ENCODE measurements at regions of chr16 and their contacts with region 1.

Region 1: GRCh38 chr16:53054670-53055485 is at the start of gene CHD9:
- DNase-seq: no peak
- H3K4me3 ChIP-seq: peak within 1 kb of the TSS; percentile 80
- CTCF ChIP-seq: peak; percentile 100

Region 2: DNA sequence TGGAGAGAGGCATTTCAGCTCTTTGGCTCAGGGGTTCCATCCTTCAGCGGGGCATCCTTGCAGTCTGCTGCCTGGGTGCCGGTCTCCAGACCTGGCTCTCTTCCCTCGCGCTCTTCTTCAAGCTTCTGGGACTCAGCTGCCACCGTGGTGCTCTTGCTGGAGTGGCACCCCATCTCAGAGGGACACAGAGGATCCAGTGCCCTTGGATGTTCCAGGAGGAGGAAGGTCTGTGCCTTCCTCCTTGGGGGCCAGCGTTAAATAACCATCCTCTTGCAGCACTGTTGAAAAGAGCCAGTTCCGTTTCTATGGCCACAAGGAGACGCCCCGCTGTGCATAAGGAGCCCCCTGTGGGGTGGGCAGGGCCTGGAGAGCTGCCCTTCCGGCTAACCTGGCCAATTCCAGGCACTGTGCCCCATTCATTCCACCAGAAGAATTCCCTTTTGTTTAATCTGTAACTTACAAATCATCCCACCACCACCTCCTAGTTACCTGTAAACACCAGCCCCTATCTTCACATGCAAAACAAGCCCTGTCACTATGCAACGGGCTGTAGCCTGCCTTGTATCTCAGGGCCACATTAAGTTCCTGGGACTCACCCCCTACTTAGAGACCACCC is 10.8 kb before region 1 on chr16:
- CTCF ChIA-PET with region 1: interaction called, 13 read pairs
- POLR2A ChIA-PET with region 1: interaction called, 4 read pairs
- DNase-seq: no peak
- H3K4me3 ChIP-seq: no peak overlapping the region
- CTCF ChIP-seq: no peak

Region 3: DNA sequence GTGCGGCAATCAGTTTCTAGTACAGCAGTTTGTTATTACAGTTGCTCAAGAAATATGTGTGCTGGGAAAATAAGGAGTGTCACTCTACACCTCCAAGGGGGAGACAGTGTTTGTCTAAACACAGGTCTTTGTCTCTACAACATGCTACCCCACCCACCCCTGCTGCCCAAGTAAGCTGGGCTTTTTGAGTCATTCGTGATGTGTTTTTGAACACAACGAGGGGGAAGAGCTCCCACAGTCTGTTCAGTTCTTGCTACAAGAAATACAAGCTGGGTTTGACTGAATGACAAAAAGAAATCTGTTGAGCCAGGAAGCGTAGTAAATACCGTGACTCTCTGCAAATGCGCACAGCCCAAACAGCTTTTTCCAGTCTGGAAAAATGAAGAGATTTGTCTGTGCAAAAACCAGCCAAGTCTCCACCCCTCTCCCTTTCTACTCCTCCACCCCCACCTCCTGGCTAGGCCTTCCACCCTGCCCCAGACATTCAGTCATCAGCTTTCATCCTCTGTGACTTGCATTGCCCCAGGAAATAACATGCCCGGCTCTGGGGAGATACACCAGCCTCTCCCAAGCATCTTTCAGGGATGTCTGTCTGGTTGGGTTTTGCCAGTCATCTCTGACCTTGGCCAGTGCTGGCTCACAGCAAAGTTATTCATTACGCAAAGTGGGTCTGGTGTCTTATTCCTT is 25.6 kb after region 1 on chr16:
- CTCF ChIA-PET with region 1: interaction called, 28 read pairs
- POLR2A ChIA-PET with region 1: interaction called, 5 read pairs
- DNase-seq: no peak
- H3K4me3 ChIP-seq: peak overlapping the region; percentile 18
- CTCF ChIP-seq: no peak

Region 4: DNA sequence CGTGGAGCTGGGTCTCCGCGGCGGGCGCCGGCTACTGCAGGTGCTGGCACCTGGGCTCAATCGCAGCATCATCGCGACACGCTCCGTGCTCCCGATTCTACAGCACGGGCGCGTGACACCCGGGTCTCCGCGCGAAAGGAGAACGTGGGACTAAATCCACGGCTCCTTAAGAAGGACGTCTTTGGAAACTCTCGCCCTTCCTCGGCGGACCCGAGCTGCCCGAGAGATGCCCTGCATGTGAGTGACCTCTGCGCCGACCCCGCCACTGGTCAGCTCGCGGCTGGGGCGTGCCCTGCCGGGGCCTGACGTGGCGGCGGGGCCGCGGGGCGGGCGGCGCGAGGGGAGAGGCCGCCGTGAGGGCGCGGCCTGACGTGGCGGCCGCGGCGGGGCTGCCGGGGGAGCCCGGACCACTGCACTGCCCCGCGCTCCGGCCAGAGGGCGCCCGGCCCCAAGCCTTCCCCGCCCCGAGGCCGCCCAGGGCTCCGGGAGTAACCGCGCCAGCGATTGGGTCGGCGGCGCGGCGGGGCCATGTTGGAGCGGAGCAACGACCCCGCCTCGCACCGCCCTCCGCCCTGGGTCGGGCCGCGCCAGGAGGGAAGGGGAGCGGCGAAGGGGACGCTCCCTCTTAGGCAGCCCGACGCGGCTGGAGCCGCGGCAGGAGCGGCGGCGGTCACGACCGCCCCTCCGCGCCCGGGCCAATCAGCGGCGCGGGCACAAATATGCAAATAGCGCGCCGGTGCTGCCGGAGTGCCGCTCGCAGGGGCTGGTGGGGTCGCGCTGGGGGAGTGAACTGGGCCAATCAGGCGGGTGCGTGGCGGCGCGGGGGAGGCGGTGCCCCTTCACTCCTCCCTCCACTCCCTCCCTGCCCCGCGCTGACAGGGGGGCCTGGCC is 75.5 kb after region 1 on chr16:
- CTCF ChIA-PET with region 1: interaction called, 11 read pairs
- POLR2A ChIA-PET with region 1: interaction called, 13 read pairs
- DNase-seq: peak; percentile 66
- H3K4me3 ChIP-seq: peak overlapping the region; percentile 80
- CTCF ChIP-seq: peak; percentile 74

Region 5: DNA sequence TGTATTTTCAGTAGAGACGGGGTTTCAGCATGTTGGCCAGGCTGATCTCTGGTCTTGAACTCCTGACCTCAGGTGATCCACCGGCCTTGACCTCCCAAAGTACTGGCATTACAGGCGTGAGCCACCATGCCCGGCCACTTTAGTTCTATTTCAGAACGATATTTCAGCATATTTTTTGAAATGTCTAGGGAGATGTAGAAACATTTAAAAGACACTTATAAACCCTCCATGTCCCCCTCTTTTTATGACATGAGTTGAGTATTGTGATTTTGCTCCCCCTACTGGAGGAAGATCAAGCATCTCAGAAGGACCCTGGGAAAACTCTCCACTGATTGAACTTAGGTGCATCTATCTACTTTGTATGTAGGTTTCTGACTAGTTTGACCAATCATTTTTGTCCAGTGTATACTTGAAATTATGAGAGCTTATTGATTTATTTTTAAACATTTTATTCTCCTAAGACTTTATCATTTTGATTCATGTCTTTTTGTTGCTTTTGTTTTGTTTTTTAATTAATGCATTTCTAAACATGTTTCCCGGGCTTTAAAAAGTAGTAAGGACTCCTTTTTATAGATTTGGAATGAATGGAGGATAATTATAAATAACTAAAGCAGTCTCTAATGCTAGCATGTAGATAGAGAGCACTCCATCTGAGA is 105.0 kb after region 1 on chr16:
- CTCF ChIA-PET with region 1: interaction called, 63 read pairs
- POLR2A ChIA-PET with region 1: no interaction called
- DNase-seq: no peak
- H3K4me3 ChIP-seq: no peak overlapping the region
- CTCF ChIP-seq: peak; percentile 54

Region 6: GRCh38 chr16:53207810-53208752 is 153.2 kb after region 1 on chr16:
- CTCF ChIA-PET with region 1: interaction called, 69 read pairs
- POLR2A ChIA-PET with region 1: no interaction called
- DNase-seq: peak; percentile 17
- H3K4me3 ChIP-seq: peak overlapping the region; percentile 67
- CTCF ChIP-seq: peak; percentile 53